ENCODE measurements at regions of chr19 and their contacts with region 1.

Region 1: GRCh38 chr19:2982561-2982960 is 5.2 kb downstream of the TLE6 start:
- DNase-seq: no peak
- ATAC-seq: no peak
- H3K4me3 Mint-ChIP-seq: no peak overlapping the region
- H3K27ac Mint-ChIP-seq: no peak overlapping the region
- H3K4me1 Mint-ChIP-seq: peaks cover 20% of the 10 kb centered on the region
- H3K27me3 Mint-ChIP-seq: peaks cover 12% of the 10 kb centered on the region
- CTCF ChIP-seq: no peak

Region 2: DNA sequence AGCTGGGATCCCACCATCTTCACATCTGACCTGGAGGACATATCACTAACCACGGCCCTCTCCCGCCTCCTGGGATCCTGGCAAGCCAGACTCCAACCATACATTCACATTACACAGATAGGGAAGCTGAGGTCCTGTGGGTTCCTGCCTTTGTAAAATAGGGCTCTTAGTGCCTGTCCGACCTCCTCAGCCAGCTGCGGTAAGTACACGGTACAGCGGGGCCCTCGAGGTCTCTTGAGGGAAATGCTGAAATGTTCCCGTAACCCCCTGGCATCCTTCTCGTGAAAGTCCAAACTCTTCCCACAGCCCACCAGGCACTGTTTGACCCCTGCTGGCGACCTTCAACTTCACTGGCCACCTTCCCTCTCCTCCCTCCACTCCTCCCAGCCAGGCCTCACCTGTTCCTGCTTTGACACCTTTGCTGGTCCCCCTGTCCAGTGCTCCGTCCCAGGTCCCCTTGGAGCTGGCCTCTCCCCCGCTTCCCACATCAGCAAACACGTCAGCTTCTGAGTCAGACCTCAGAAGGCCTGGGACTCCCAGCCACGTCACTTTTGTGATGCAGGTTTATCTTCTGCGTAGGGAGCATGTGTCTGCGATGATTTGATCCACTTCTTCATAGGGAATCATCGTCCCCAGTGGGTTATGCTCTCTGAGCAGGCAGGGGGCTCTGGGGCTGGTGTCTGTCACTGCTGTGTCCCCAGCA is 271.2 kb before region 1 on chr19:
- CTCF ChIA-PET with region 1: no interaction called
- POLR2A ChIA-PET with region 1: no interaction called
- intact Hi-C with region 1: no loop called
- DNase-seq: no peak
- ATAC-seq: peak; percentile 5
- H3K4me3 Mint-ChIP-seq: peak overlapping the region; percentile 66
- H3K27ac Mint-ChIP-seq: peak overlapping the region; percentile 87
- H3K4me1 Mint-ChIP-seq: peaks cover 39% of the 10 kb centered on the region
- H3K27me3 Mint-ChIP-seq: no peaks in the 10 kb centered on the region
- CTCF ChIP-seq: no peak

Region 3: DNA sequence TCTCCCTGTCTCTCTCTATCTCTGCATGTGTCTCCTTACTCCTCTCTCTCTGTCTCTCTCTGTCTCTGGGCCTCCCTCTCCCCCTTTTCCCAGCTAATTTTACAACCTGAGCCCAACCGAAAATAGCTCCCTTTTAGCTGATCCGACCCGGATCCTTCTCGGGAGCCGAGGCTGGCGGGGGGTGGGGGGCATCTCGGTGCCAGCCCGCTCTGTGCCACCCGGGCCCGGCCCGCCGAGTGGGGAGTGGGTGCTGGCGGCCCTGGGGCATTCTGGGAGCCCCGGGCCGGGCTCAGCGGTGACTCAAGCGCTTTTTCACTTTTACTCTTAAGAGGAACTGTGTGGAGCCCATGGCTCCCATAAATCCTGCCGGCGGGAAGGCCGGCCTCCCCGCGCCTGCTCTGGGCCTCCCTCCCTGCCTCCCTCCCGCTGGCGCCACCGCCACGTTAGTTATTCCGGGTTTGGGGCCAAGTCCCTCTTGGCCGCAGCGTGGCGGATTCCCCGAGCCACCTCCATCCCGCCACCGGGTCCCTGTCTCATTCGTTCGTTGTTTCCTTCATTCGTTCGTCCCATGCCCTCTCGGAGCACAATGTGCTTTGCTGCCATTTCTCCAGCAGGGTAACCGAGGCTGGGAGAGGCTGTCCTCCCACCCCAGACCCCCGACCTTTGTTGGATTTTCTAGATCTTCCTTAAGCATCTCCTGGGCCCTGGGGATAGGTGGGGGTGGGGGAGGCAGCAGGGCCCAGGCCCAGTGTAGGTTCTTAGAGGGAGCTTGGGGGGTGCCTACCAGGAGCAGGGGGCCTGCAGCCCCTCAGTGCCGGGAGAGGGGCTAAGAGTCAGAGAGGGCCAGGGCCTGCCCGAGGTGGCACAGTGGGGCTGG is 387.0 kb after region 1 on chr19:
- CTCF ChIA-PET with region 1: no interaction called
- POLR2A ChIA-PET with region 1: interaction called, 11 read pairs
- intact Hi-C with region 1: no loop called
- DNase-seq: no peak
- ATAC-seq: peak; percentile 76
- H3K4me3 Mint-ChIP-seq: peak overlapping the region; percentile 77
- H3K27ac Mint-ChIP-seq: no peak overlapping the region
- H3K4me1 Mint-ChIP-seq: peaks cover 50% of the 10 kb centered on the region
- H3K27me3 Mint-ChIP-seq: peaks cover 16% of the 10 kb centered on the region
- CTCF ChIP-seq: no peak